Mammary epithelial cell (primary cell): ENCODE measurements at regions of chr3 and their contacts with region 1.

Region 1: DNA sequence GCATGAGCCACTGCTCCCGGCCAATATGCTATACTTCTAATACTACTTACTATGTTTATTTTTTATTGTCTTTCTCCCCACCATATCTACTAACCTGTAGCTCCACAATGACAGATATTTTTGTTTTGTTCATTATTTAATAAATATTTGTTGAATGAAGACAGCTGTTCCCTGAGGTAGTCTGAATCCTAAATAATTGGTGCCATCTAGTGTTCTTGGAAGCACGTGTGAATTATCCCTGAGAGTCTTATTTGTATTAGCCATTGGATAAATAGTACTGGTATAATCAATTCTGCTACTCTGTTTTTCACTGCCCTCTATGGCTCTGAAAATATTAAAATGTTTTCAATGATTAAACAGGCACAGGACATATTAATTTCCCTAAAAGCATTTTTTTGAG is 5.6 kb upstream of the APPL1 start:
- DNase-seq: no peak
- H3K4me3 ChIP-seq: no peak overlapping the region
- H3K27ac ChIP-seq: no peak overlapping the region
- H3K4me1 ChIP-seq: peaks cover 8% of the 10 kb centered on the region
- H3K27me3 ChIP-seq: no peaks in the 10 kb centered on the region
- CTCF ChIP-seq: peak in 1 of 2 donors; percentile 43

Region 2: GRCh38 chr3:57158813-57159738 is 62.8 kb before region 1 on chr3:
- CTCF ChIA-PET with region 1: no interaction called
- dilution Hi-C with region 1: no loop called
- in situ Hi-C with region 1: no loop called
- intact Hi-C with region 1: no loop called
- DNase-seq: peak; percentile 21
- H3K4me3 ChIP-seq: no peak overlapping the region
- H3K27ac ChIP-seq: no peak overlapping the region
- H3K4me1 ChIP-seq: peaks cover 32% of the 10 kb centered on the region
- H3K27me3 ChIP-seq: no peaks in the 10 kb centered on the region
- CTCF ChIP-seq: no peak

Region 3: GRCh38 chr3:57169872-57170623 is 51.8 kb before region 1 on chr3:
- CTCF ChIA-PET with region 1: no interaction called
- dilution Hi-C with region 1: no loop called
- in situ Hi-C with region 1: no loop called
- intact Hi-C with region 1: loop called (anchors 1 kb)
- DNase-seq: peak; percentile 48
- H3K4me3 ChIP-seq: peak overlapping the region; percentile 35 to 44 (median 41)
- H3K27ac ChIP-seq: no peak overlapping the region
- H3K4me1 ChIP-seq: peaks cover 5% of the 10 kb centered on the region
- H3K27me3 ChIP-seq: no peaks in the 10 kb centered on the region
- CTCF ChIP-seq: peak; percentile 46 to 79

Region 4: DNA sequence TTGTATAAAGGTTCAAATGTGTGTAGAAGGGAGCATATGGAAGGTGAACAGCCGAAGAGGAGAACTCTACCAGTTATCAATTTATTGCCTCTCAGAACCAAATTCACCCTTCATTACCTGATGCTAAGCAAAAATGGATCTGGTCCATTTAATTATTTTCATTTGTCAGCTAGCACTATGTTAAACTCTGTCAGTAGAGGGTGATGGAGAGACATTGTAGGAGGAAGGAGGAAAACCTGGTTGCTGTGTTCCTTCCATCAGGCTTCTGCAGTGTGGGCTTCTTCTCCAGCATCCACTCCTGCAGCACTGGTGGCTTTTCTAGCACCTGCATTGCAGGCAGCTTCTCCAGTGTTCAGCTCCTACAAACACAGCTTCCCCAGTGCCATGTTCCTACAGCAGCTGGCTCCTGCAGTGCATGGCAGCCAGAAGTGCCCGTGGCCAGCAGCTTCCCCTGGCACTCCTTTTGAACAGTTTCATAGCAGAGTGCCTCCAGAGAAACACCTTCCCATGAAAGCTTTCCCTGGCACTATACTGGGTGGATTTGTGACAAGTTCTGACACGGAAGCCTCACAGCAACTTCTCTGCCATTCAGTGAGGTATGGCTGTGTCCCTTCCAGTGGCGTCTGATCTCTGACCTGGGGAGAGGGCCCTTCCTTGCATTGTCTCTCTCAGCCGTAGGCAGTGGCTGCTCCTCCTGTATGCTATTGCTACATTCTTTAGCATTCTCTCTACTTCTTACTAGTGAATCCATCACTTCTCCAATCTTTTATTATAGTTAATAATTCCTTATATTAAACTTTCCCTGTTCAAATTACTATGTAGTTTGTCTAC is 42.1 kb before region 1 on chr3:
- CTCF ChIA-PET with region 1: no interaction called
- dilution Hi-C with region 1: no loop called
- in situ Hi-C with region 1: no loop called
- intact Hi-C with region 1: loop called (anchors 2 kb)
- DNase-seq: no peak
- H3K4me3 ChIP-seq: no peak overlapping the region
- H3K27ac ChIP-seq: no peak overlapping the region
- H3K4me1 ChIP-seq: no peaks in the 10 kb centered on the region
- H3K27me3 ChIP-seq: no peaks in the 10 kb centered on the region
- CTCF ChIP-seq: peak; percentile 45 to 66